Mammary epithelial cell (primary cell): ENCODE measurements at regions of chr22 and their contacts with region 1.

Region 1: DNA sequence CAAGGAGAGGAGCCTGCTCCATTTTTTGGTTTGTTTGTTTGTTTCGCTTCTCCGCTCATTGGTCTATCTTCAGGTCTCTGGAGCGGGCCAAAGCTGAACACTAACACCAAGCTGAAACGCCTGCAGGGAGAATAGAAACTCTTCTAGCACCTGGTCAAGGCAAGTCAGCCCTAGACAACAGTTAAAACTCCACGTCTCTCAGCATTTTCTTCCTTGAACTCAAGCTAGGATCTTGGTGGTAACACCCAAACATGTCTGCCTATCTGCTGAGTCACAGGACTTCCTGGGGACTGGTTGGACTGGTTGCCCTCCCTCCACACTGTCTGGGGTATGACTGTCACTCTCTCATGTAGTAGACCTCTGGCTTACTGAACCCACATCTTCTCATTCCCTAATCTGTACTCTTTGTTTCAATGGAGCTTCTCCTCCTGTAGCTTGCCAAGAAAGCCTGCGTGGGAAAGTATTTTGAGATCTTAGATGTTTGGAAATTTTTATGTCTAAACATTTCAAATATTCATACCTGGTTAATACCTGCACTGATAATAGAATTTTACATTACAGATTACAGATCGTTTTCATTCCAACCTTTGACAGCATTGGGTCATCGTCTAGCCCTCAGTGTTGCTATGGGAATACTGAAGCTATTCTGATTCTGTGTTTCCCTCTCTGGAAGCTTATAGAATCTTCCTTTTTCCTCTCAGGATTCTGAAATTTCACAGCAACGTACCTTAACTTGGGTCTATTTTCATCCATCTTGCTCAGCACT is 24.1 kb upstream of the RBFOX2 start:
- DNase-seq: peak; percentile 91
- H3K4me3 ChIP-seq: no peak overlapping the region
- H3K27ac ChIP-seq: peak overlapping the region; percentile 78
- H3K4me1 ChIP-seq: peaks cover 33% of the 10 kb centered on the region
- H3K27me3 ChIP-seq: no peaks in the 10 kb centered on the region
- CTCF ChIP-seq: no peak

Region 2: GRCh38 chr22:35627264-35628041 is 425.2 kb before region 1 on chr22:
- CTCF ChIA-PET with region 1: no interaction called
- dilution Hi-C with region 1: no loop called
- in situ Hi-C with region 1: no loop called
- intact Hi-C with region 1: no loop called
- DNase-seq: peak; percentile 82
- H3K4me3 ChIP-seq: peak overlapping the region; percentile 30 to 52 (median 51)
- H3K27ac ChIP-seq: peak overlapping the region; percentile 75
- H3K4me1 ChIP-seq: peaks cover 26% of the 10 kb centered on the region
- H3K27me3 ChIP-seq: no peaks in the 10 kb centered on the region
- CTCF ChIP-seq: peak; percentile 35 to 80

Region 3: GRCh38 chr22:35677460-35678187 is 375.1 kb before region 1 on chr22:
- CTCF ChIA-PET with region 1: interaction called, 23 read pairs
- dilution Hi-C with region 1: no loop called
- in situ Hi-C with region 1: no loop called
- intact Hi-C with region 1: no loop called
- DNase-seq: no peak
- H3K4me3 ChIP-seq: no peak overlapping the region
- H3K27ac ChIP-seq: no peak overlapping the region
- H3K4me1 ChIP-seq: peaks cover 6% of the 10 kb centered on the region
- H3K27me3 ChIP-seq: no peaks in the 10 kb centered on the region
- CTCF ChIP-seq: no peak

Region 4: DNA sequence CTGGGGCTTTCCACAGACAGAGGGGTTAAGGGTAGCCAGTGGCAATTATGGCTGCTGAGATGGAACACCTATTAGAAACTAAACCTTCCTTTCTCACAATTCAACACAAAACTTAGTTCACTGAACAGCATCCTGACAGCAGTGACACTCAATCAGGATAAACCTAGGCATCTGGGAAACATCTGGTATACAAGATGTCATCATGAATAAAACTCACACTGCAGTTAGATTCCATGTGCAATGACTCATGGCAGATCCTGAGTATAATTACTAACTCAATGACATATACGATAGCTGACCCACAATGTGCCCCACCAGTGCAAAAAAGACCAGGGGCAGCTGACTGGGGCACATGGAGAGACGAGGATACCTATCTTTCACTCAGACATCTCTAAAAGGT is 41.8 kb before region 1 on chr22:
- CTCF ChIA-PET with region 1: no interaction called
- dilution Hi-C with region 1: no loop called
- in situ Hi-C with region 1: no loop called
- intact Hi-C with region 1: no loop called
- DNase-seq: peak; percentile 67
- H3K4me3 ChIP-seq: no peak overlapping the region
- H3K27ac ChIP-seq: no peak overlapping the region
- H3K4me1 ChIP-seq: peaks cover 15% of the 10 kb centered on the region
- H3K27me3 ChIP-seq: no peaks in the 10 kb centered on the region
- CTCF ChIP-seq: no peak

Region 5: DNA sequence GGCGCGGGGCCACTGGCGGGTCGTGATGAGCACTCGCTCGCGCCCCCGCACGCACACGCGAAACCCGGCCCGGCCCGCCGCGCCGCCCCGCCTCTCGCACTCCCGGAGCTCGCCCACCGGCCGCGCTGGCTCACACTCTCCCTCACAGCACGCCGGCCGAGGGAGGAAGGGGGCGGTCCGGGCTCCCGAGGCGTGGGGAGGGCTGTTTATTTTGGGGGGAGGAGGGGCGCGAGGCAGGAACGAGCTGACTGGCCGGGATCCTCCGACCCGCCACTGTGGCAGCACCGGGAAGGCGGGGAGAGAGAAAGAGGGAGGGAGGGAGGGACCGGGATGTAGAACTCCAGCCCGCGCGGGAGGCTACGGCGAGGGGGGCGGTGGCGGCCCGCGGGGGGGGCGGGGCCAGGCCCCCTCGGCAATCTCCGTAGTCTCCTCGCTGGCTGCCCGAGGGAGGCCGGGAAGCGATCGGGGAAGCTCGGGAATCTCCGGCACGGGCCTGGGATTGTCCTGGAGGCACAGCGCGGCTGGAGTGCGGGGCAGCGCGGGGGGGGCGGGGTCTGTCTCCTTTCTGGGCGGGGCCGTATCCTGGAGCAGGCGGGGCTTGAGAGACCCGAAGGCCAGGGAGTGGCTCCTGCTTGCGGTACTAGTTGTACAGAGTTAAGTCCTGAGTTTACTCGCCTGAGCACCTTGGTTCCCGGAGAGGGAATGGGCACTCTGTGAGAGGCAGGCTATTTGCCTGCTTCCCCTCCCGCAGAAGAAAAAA is 23.9 kb before region 1 on chr22 and contains the start of gene RBFOX2:
- CTCF ChIA-PET with region 1: no interaction called
- dilution Hi-C with region 1: no loop called
- in situ Hi-C with region 1: no loop called
- intact Hi-C with region 1: loop called (anchors 2 kb)
- DNase-seq: peak; percentile 96
- H3K4me3 ChIP-seq: peak within 1 kb of the TSS; percentile 84 to 92 (median 86)
- H3K27ac ChIP-seq: peak within 1 kb of the TSS; percentile 66
- H3K4me1 ChIP-seq: peaks cover 16% of the 10 kb centered on the region
- H3K27me3 ChIP-seq: no peaks in the 10 kb centered on the region
- CTCF ChIP-seq: no peak
- total RNA-seq, gene RBFOX2: 126 to 137 TPM

Region 6: GRCh38 chr22:36162127-36163034 is 109.7 kb after region 1 on chr22:
- CTCF ChIA-PET with region 1: no interaction called
- dilution Hi-C with region 1: no loop called
- in situ Hi-C with region 1: no loop called
- intact Hi-C with region 1: no loop called
- DNase-seq: no peak
- H3K4me3 ChIP-seq: no peak overlapping the region
- H3K27ac ChIP-seq: no peak overlapping the region
- H3K4me1 ChIP-seq: no peaks in the 10 kb centered on the region
- H3K27me3 ChIP-seq: no peaks in the 10 kb centered on the region
- CTCF ChIP-seq: no peak

Region 7: GRCh38 chr22:36239401-36240171 is 186.9 kb after region 1 on chr22 and contains the start of gene APOL2:
- CTCF ChIA-PET with region 1: no interaction called
- dilution Hi-C with region 1: no loop called
- in situ Hi-C with region 1: no loop called
- intact Hi-C with region 1: no loop called
- DNase-seq: peak; percentile 89
- H3K4me3 ChIP-seq: peak within 1 kb of the TSS; percentile 58 to 73 (median 71)
- H3K27ac ChIP-seq: peak within 1 kb of the TSS; percentile 39
- H3K4me1 ChIP-seq: peaks cover 18% of the 10 kb centered on the region
- H3K27me3 ChIP-seq: no peaks in the 10 kb centered on the region
- CTCF ChIP-seq: peak; percentile 52 to 79
- total RNA-seq, gene APOL2: 16.8 to 24.3 TPM